ENCODE measurements at regions of chr2 and their contacts with region 1.

Region 1: DNA sequence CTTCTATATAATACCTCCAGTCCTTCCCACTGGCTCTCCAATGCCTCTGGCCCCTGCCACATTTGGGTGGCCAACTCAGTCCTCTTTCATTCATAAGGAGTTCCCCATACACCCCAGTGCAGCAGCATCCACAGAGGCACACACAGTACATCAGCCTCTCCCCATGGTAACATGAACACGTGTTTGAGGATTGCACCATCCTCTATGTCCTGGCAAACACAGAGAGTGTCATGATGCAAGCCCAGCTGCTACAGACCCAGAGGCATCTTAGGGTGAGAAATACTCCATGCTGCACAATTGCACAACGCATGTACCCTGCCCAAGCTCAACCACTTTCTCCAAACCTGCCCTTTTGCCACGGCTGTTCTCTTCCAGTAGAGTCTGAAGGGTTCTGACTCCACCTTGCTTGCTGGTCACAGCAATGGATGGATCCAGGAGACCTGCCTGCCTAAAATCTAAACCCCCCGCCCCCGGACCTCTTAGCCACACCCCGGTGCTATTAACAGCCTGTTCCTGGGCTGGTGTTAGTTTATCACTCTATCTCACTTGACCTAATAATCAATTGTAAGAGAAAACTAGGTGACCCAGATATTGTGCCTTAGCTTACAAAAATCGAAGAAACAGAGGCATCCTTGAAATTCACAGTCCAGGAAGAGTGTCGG is 11.4 kb downstream of the IGFBP5 start:
- DNase-seq: peak; percentile 64
- ATAC-seq: peak; percentile 77

Region 2: DNA sequence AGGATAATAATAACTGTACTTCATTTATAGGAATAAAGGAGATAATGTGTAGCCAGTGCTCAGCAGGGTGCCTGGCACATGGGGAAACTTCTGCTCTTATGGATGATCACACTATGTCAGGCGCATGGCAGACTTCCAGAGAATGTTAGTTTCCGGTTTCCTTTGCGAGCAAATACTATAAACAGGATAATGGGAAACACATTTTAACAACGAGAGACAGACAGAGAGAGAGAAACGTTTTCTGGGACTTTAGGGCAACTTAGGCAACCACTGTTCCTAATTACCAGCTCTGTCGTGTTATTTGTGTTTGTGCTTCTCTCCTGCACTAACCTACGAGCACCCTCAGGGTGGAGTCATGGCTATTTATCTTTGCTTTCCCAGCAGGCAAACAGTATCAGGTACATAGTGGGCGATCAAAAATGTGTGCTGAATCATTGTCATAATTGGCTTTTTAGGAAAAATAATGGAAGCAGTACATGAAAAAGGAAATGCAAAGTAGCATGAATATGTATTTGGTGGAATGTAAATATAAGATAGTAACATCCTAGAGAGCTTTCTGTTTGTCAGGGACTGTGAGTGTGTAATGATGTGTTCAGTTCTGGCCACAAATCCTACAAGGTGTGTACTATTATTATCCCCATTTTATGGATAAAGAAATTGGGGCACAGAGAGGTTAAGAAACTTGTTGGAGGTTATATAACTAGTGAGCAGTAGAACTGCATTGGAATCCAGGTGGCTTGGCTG is 87.6 kb before region 1 on chr2:
- intact Hi-C with region 1: no loop called
- DNase-seq: no peak
- ATAC-seq: no peak

Region 3: GRCh38 chr2:216989340-216990129 is 305.6 kb after region 1 on chr2:
- intact Hi-C with region 1: loop called (anchors 5 kb)
- DNase-seq: no peak
- ATAC-seq: no peak

Region 4: GRCh38 chr2:217756375-217757107 is 1072.6 kb after region 1 on chr2:
- intact Hi-C with region 1: loop called (anchors 5 kb)
- DNase-seq: peak; percentile 82
- ATAC-seq: peak; percentile 76

Measured in Right ventricle myocardium inferior (tissue), 1 donor.